ENCODE measurements at regions of chr3 and their contacts with region 1.

Region 1: DNA sequence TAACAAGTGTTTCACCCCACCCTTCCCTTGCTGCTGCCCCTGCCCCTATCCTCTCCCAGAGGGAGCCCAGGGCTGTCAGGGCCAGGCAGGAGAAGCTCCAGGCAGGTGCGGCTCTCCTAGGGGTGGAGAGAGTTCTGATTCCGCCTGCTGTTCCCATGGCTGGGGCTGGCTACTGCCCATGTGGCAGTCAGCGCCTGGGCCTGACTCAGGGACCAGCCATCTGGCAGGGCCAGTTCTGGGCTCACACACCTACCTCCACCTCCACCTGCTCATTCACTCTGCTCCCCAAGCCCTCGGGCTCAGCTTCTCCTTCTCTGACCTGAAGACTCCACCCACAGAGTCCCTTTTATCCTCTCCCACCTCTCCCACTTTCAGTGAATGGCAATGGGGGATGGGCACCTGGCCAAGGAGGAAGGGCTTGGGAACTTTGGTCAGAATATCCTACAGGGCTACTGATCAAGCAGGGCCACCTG is 23.4 kb downstream of the AMOTL2 start:
- DNase-seq: peak; percentile 93
- H3K4me3 Mint-ChIP-seq: peak overlapping the region; percentile 11
- H3K27ac Mint-ChIP-seq: peak overlapping the region; percentile 90
- H3K4me1 Mint-ChIP-seq: peaks cover 83% of the 10 kb centered on the region
- H3K27me3 Mint-ChIP-seq: no peaks in the 10 kb centered on the region
- CTCF ChIP-seq: no peak

Region 2: GRCh38 chr3:134333522-134334181 is 17.2 kb before region 1 on chr3:
- CTCF ChIA-PET with region 1: interaction called, 5 read pairs
- intact Hi-C with region 1: loop called (anchors 2 kb)
- DNase-seq: no peak
- H3K4me3 Mint-ChIP-seq: no peak overlapping the region
- H3K27ac Mint-ChIP-seq: no peak overlapping the region
- H3K4me1 Mint-ChIP-seq: peaks cover 86% of the 10 kb centered on the region
- H3K27me3 Mint-ChIP-seq: no peaks in the 10 kb centered on the region
- CTCF ChIP-seq: no peak